ENCODE measurements at regions of chr3 and their contacts with region 1.

Region 1: GRCh38 chr3:156674046-156674910 is at the start of gene TIPARP:
- DNase-seq: peak; percentile 100
- ATAC-seq: peak; percentile 96
- total RNA-seq, gene TIPARP: 26.0 TPM

Region 2: DNA sequence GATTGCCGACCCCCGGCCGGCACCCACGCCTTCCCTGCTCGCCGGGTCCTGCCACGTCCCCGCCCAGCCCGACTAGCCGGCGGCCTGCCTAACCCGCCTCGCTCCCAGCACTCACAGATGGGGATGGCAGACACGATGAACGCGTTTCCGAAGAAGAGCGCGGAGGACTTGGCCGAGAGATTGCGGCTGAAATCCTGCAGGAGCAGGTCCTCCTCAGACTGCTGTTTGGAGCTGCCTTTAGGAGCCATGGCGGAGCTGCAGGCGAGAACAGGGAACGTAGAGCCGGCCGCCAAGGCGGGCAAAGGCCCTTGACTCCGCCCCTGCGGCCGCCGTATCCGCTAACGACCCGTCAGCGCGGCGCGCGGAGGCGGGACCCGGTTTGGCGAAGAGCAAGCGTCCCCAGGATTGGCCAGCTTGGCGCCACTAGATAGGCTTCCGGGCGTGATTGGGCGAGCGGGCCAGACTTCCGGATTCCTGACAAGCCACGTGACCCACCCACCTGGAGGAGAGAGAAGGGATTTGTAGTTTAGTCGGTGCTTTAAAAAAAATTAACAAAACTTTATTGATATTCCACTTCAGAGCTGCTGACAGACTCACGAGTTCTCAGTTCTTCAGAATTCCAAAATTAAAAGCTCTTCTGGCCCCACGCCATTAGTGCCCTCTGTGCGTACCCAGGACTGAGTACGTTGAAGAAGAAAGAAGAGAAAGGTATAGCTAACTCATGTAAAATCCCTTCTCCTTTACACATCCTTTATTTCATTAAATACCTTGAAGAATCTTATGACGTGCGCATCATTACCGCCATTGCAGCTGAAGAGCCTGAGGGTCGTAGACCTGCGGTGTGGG is 119.2 kb before region 1 on chr3 and contains the start of gene SSR3:
- intact Hi-C with region 1: loop called (anchors 2 kb)
- DNase-seq: peak; percentile 100
- ATAC-seq: peak; percentile 99
- total RNA-seq, gene SSR3: 195 TPM

Region 3: DNA sequence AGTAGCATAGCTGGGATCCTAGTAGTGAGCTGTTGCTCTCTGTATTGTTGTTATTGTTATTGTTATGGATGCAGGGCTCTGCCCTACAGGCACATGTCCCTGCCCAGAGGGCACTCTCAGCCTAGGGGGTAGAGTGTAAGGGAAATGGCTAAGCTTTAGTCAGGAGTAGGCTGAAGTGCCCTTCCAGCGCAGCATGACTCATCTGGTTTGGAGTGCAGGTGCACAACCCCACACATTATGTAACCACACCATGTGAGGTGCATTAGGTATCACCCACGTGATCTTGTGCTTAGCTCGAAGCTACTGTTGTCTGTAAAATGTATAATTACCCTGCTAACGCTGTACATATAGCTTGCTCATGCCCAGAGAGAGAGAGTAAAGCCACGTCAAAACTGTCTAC is 48.2 kb before region 1 on chr3:
- intact Hi-C with region 1: no loop called
- DNase-seq: no peak
- ATAC-seq: no peak

Region 4: DNA sequence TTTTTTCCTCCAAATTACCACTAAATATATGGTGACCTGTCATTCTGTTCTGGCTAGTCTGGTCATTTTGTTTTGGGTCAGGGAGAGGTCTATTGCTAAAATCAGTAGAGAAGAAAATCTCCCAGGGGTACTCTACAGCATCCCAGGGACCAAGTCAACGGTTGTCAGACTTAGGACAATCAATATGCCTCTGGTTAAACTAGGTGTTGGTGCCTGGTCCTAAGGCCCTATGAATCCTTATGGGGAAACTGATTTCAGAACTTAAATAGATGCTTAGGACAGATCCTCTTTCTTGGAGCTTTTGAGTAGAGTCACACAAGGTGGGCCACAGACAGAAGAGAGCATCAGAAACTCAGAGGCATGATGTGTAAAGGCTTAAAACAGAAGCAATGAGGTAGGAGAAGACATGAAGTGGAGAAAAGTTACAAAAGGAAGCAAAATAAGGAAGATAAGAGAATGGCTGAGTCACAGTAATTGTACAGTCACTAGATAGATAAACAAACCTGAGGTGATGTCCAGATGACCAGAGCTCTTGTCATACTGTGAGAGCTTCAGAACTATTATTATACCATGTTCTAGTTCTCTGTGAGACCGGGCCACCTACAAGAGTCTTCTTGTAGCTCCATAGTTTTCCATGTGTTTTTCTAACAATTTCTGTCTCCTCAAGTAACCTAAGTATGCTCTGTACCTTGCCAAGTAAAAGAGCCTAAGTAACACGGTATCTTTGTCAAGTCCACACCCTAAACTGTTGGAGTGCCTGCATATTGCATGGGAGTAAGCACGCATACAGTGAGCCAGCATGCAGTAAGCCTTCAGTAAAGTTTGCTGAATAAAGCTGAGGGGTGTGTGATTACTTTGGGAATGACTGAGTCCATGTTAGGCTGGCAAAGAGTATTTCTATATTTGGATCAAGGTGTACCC is 107.3 kb after region 1 on chr3:
- intact Hi-C with region 1: no loop called
- DNase-seq: no peak
- ATAC-seq: no peak

Region 5: GRCh38 chr3:156816800-156817645 is 142.7 kb after region 1 on chr3:
- intact Hi-C with region 1: loop called (anchors 2 kb)
- DNase-seq: peak; percentile 95
- ATAC-seq: peak; percentile 95

Region 6: DNA sequence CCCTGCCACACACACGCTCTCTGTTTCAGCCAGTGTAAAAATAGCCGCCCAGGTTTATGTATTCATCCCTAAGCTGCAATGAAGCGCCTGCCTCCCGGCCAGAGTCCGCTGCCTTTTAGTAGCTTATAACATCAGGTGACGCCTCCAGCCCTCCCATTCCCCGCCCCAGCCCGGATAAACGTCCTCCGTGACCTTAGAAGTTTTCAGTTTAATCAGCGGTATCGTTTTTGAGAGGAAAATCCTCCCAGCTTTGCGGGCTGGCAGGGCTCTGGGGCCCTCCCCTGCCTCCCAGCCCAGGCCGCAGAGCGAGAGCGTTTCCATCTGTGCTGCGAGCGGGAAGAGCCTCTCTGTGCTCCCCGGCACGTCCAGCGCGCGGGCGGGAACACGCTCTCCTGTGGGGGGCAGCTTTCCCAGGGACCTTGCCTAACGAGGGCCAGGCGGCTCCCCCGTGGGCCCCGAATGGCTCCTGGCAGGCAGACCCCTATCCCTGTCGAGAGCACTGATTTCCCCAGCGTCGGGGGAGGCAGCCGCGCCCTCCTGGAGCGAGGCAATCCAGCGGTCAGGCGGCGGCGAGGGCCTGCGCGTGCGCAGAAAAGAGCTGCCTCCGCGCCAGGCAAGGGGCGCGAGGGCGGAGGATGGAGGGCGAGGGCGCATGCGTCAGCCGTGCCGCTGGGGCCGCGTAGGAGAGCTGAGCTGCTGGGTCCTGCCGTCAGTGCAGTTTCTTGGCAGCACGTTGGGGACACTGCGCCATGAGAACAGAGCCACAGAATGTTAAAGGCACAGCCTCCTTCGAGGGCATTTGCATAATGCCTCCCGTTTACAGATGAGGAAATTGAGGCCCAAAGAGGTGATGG is 414.6 kb after region 1 on chr3:
- intact Hi-C with region 1: loop called (anchors 2 kb)
- DNase-seq: peak; percentile 96
- ATAC-seq: peak; percentile 87